Calu3 (cell line): ENCODE measurements at regions of chr1 and their contacts with region 1.

Region 1: DNA sequence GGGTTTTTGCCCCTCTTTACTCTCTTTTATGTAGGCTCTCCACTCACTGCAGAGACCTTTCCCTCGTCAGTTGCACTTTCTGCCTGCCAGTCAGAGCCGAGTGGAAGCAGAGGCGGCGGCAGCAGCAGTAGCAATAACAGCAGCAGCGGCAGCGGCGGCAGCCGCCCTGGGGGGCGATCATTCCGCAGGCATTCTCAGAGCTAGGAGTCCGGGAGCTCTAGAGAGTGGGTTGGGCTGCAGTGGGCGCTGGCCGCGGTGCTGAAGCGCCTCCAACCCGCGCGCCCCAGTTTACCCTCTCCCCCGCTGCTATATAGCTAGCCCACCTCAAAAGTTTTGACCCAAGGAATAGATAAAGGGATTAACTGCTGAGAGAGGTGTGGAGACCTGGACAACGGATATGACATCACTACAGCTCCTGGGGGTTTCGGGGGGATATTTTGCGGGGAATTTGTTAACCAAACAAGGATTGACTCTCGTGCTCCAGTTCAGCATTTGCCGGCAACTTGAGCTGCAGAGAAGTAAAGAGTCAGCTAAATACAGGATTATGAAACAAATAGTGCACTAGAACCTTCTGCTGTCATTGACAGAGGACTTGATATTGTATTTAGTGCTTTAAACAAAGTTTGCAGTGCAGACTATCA is at the start of gene OLFM3:
- DNase-seq: peak; percentile 22
- H3K4me3 Mint-ChIP-seq: peak within 1 kb of the TSS; percentile 53
- H3K27ac Mint-ChIP-seq: no peak within 1 kb of the TSS
- H3K4me1 Mint-ChIP-seq: no peaks in the 10 kb centered on the region
- H3K27me3 Mint-ChIP-seq: no peaks in the 10 kb centered on the region
- CTCF ChIP-seq: no peak
- total RNA-seq, gene OLFM3: not detected in 2 replicates

Region 2: DNA sequence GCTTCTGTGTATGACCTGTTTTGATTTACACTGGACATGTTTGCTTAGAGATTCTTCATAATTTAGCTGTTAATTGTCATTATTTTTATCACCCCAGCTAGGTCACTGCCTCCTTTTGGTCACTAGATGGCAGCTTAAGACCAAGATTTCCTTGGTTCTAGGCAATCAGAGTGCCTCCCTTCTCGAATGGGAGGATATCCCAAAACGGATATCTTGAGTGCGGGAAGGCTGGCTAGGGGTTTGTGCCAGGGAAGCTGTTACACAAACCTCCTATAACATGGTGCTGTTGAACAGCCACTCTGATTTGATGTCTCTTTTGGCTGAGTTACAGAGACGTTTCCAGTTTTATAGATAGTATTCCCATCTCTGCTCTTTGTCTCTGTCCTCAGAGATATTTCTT is 476.6 kb before region 1 on chr1:
- CTCF ChIA-PET with region 1: no interaction called
- intact Hi-C with region 1: loop called (anchors 10 kb)
- DNase-seq: peak; percentile 2
- H3K4me3 Mint-ChIP-seq: no peak overlapping the region
- H3K27ac Mint-ChIP-seq: no peak overlapping the region
- H3K4me1 Mint-ChIP-seq: no peaks in the 10 kb centered on the region
- H3K27me3 Mint-ChIP-seq: no peaks in the 10 kb centered on the region
- CTCF ChIP-seq: peak; percentile 23

Region 3: DNA sequence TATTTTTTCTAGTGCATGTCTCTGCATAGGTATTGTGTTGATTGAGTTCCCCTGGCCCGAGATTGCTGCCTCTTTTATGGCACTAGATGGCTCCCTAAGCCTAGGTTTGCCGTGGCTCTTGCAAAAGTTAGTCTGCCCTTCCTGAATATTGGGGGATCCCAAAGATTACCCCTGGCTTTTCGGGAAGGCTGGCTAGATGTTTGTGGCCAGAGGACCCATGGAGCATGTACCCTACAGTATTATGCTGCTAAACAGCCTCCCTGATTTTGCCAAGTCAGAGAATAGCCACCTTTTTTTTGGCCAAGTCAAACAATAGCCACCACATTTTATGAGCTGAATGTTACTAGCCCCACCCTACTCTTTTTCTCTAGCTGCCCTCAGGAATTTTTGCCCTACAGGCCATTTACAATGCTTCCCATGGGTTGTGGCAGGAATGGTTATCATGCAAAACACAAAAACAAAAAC is 343.4 kb before region 1 on chr1:
- CTCF ChIA-PET with region 1: no interaction called
- intact Hi-C with region 1: loop called (anchors 5 kb)
- DNase-seq: peak; percentile 28
- H3K4me3 Mint-ChIP-seq: no peak overlapping the region
- H3K27ac Mint-ChIP-seq: no peak overlapping the region
- H3K4me1 Mint-ChIP-seq: no peaks in the 10 kb centered on the region
- H3K27me3 Mint-ChIP-seq: no peaks in the 10 kb centered on the region
- CTCF ChIP-seq: no peak

Region 4: DNA sequence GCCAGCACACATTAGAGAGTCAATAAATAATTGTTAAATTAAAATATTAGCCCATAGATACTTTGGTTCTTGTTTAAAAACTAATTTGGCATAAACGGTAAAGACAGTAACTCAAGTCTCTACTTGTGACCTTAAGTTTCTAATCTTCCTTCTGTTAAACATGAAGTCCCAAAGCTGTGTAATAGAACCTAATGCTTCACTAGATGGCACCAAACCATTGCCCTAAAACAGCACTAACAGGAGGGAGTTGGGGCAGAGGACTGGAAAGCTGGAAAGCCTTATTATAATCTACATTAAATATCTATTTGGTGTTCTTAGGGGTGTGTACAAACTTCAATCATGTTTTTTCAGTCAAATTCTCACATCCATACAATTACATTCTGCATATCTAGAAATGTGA is 176.9 kb before region 1 on chr1:
- CTCF ChIA-PET with region 1: no interaction called
- intact Hi-C with region 1: loop called (anchors 10 kb)
- DNase-seq: no peak
- H3K4me3 Mint-ChIP-seq: no peak overlapping the region
- H3K27ac Mint-ChIP-seq: no peak overlapping the region
- H3K4me1 Mint-ChIP-seq: no peaks in the 10 kb centered on the region
- H3K27me3 Mint-ChIP-seq: no peaks in the 10 kb centered on the region
- CTCF ChIP-seq: no peak

Region 5: DNA sequence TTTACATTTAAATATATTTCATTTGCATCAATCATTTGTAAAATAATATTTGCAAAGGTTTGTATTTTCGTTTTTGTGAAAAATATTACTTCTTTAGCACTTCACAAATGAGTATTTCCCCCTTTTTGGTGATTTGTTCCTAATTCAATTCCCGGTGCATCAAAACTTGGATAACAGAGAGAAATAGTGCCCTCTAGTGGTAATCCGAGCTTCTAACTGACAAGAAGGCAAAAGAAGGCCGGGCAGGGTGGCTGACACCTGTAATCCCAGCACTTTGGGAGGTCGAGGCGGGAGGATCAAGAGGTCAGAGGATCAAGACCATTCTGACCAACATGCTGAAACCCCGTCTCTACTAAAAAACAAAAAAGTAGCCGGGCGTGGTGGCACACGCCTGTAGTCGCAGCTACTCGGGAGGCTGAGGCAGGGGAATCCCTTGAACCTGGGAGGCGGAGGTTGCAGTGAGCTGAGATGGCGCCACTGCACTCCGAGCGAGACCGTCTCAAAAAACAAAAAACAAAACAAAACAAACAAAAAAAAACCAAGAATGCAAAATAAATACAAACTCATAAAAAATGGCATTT is 973.6 kb after region 1 on chr1:
- CTCF ChIA-PET with region 1: no interaction called
- intact Hi-C with region 1: loop called (anchors 10 kb)
- DNase-seq: peak; percentile 18
- H3K4me3 Mint-ChIP-seq: no peak overlapping the region
- H3K27ac Mint-ChIP-seq: no peak overlapping the region
- H3K4me1 Mint-ChIP-seq: no peaks in the 10 kb centered on the region
- H3K27me3 Mint-ChIP-seq: no peaks in the 10 kb centered on the region
- CTCF ChIP-seq: no peak